Ovary (tissue), 10 donors: ENCODE measurements at regions of chr1 and their contacts with region 1.

Region 1: DNA sequence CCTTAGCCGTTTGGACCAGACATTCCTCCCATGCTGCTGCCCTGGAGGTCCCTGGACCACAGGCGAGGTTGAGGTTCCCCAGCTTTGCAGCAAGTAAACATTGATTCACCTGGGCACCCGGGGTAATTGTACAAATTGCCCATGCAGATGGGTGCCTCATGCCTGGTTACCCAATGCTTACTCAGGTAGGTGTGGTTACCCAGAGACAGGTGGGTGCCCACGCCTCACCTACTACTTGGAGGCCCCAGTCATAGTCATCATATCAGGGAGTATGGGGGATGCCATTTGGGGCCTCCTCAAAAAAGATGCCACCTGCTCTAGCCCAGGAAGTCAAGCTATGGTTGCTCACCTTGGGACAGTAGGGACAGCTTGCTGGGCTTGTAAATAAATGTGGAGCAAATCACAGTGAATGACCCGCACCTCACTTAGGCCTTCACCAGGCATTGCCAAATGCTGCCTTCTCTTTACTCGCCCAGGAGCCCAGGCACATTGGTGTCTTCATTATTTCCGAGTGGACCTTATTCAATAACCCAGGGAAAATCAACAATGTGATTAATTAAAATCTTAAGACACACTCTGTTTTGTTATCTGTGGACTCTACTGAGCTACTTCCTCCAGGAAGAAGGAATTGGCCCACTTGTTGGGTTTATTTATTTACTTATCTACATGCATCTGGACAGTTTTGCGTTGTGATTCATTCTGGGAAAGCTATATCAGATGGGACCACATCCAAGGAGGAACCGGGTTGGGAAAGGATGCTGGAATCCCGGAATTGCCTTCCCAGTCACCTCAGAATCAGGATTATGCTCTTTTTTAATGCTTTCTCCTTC is 35.6 kb upstream of the GRHL3 start:
- DNase-seq: no peak
- H3K4me3 ChIP-seq: no peak overlapping the region
- H3K27ac ChIP-seq: no peak overlapping the region
- H3K4me1 ChIP-seq: no peaks in the 10 kb centered on the region
- H3K27me3 ChIP-seq: no peaks in the 10 kb centered on the region
- CTCF ChIP-seq: no peak
- EP300 ChIP-seq: no peak
- POLR2A ChIP-seq: no peak

Region 2: DNA sequence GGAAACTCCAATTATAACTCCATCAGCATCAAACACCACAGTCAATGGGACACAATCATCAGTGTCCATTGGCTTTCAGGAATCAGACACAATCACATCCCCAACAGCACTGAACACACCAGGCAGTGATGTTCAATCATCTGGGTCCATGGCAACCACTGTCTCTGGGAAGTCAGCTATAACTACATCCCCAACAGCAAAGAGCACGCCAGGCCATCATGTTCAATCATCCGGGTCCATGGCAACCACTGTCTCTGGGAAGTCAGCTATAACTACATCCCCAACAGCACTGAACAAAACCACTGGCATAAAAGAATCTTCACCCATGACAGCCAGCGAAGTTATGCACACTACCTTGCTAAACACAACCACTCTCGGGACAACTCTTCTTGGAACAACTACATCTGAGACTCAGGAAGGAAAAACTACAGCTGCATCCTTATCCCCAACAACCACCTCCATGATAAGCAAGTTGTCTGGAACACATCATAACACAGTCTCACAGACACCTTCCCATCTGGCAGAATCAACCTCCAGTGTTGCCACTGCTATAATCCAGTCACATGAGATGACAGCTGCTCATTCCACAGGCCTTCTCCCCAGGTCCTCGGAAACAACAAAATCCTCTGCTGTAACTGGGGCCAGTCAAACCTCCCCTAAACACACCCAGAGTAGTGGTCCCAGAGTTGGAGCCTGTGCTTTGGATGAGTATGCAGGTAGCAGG is 1926.8 kb after region 1 on chr1:
- intact Hi-C with region 1: loop called in 1 of 4 experiments (anchors 5 kb)
- DNase-seq: no peak
- H3K4me3 ChIP-seq: no peak overlapping the region
- H3K27ac ChIP-seq: no peak overlapping the region
- H3K4me1 ChIP-seq: no peaks in the 10 kb centered on the region
- H3K27me3 ChIP-seq: no peaks in the 10 kb centered on the region
- CTCF ChIP-seq: no peak
- EP300 ChIP-seq: no peak
- POLR2A ChIP-seq: no peak